ENCODE measurements at regions of chr11 and their contacts with region 1.

Region 1: GRCh38 chr11:36009473-36009872 is 65.6 kb downstream of the LDLRAD3 start:
- DNase-seq: peak; percentile 69
- ATAC-seq: peak; percentile 29
- H3K4me3 ChIP-seq: peak overlapping the region; percentile 47
- H3K27ac ChIP-seq: peak overlapping the region; percentile 68
- H3K4me1 ChIP-seq: peaks cover 66% of the 10 kb centered on the region
- H3K27me3 ChIP-seq: no peaks in the 10 kb centered on the region
- CTCF ChIP-seq: no peak

Region 2: DNA sequence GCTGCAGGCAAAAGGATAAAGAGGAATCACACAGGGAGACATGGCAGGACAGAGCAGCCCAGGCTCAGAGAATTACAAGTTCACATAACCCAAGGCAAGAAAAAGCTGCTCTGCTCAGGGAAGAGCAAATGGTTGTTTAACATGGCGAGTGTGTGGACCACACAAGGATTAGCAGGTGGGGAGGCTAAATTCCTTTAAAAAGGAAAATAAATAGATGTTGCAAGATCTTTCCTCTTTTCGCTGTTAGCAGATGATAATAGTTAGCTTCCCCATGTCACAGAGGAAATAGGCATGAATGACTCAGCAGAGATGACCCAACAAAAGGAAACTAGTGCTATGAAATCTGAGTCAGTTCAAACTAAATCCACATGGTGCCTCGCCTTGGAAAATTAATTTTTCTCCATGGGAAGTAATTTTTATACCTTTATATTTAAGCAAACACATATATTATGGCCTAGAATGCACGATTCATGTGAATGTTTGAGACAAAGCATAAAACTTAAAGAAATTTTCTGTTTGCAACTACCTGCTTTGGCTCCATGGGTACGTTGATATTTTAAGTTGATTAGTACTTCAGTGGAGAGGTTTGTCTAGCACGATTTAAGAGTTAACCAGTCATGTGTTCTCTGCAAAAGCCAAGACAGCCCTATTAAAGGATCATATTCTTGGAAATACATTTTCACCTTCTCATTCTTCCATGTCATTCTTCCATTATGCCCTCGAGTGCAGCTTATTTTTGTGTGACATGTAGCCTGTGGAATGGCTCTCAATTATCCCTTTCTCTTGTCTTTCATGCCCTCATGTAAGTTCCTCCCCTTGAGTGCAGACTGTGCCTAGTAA is 429.7 kb before region 1 on chr11:
- CTCF ChIA-PET with region 1: no interaction called
- POLR2A ChIA-PET with region 1: no interaction called
- intact Hi-C with region 1: loop called (anchors 1 kb)
- DNase-seq: peak; percentile 86
- ATAC-seq: peak; percentile 82
- H3K4me3 ChIP-seq: peak overlapping the region; percentile 54; the same call in 1 of the 2 replicates
- H3K27ac ChIP-seq: peak overlapping the region; percentile 84
- H3K4me1 ChIP-seq: peaks cover 33% of the 10 kb centered on the region
- H3K27me3 ChIP-seq: no peaks in the 10 kb centered on the region
- CTCF ChIP-seq: no peak

Region 3: DNA sequence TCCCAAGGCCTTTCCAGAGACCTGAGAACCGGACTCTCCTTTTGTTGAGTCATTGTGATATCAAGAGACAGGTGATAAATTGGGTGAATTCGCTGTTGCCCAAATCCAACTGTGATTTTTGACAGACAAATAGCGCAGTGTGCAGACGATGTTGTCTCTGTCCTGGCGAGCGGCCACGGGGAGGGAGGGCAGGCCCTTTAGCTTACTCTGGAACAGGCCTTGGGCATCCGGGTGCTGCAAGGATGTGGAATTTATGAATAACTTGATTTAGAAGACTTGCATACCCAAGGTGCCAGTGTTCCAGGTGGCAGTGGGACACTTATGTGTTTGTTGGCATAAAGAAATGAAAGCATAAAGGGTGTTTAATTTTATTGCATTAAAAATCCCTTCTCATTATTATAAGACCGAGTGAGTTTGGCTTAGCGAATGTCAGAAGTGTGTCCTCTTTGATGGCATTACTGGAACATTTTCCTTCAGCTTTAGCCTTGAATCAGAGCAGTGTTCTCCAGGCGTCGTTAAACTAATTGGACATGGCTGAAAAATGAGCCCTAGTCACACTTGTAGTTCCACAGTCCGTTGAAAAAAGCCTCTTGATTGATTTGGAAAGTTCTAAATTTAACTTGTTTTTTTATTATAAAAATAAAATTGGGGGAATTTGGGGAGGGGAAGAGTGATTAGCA is 56.3 kb before region 1 on chr11:
- CTCF ChIA-PET with region 1: no interaction called
- POLR2A ChIA-PET with region 1: no interaction called
- intact Hi-C with region 1: loop called (anchors 5 kb)
- DNase-seq: peak; percentile 31
- ATAC-seq: peak; percentile 16; the same call in 1 of the 2 replicates
- H3K4me3 ChIP-seq: no peak overlapping the region
- H3K27ac ChIP-seq: peak overlapping the region; percentile 29
- H3K4me1 ChIP-seq: peaks cover 54% of the 10 kb centered on the region
- H3K27me3 ChIP-seq: no peaks in the 10 kb centered on the region
- CTCF ChIP-seq: no peak

Region 4: DNA sequence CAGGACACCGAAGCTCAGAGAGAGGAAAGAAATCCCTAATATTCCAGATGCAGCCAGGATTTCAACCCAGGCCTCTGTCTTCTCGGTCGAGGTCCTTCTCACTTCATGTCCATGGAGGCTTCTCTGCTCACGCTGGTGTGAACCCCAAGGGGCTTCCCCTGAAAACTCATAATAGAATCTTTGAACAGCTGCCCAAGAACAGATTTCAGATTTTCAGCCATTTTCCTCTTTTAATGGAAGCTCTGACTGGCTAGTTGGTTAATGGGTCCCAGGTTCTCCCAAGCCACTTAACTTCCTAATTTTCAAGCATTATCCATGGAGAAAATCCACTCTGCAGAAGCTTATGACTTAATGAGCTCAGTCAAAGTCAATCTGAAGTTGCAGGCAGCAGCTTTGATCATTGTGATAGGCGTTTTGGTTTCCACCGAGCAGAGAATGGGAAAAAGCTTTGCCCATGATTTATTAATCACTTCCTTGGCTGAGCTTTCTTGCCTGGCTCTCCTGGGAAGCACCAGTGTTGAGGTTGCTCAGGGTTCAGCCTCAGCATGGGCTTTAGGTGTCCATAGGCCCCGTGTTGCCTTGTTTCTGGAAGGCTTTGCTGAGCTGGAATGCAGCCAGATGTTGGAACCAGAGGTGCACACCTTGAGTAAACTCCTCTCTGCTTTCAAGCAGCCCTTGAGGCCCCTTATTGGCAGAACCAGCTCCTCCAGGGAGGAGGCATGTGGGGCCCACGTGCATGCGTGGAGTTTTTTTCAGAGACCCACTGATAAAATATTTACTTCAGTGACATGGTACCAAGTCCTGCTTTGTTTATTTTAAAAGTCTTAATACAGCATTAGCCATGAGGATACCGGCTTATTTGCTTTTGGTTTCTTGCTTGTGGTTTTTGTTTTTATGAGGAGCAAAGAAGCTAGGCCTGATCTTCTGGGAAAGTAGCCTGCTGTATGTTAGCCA is 40.1 kb before region 1 on chr11:
- CTCF ChIA-PET with region 1: no interaction called
- POLR2A ChIA-PET with region 1: no interaction called
- intact Hi-C with region 1: loop called (anchors 1 kb)
- DNase-seq: peak; percentile 60
- ATAC-seq: peak; percentile 91
- H3K4me3 ChIP-seq: no peak overlapping the region
- H3K27ac ChIP-seq: peak overlapping the region; percentile 71
- H3K4me1 ChIP-seq: peaks cover 20% of the 10 kb centered on the region
- H3K27me3 ChIP-seq: no peaks in the 10 kb centered on the region
- CTCF ChIP-seq: no peak